H1 (cell line): ENCODE measurements at regions of chr9 and their contacts with region 1.

Region 1: DNA sequence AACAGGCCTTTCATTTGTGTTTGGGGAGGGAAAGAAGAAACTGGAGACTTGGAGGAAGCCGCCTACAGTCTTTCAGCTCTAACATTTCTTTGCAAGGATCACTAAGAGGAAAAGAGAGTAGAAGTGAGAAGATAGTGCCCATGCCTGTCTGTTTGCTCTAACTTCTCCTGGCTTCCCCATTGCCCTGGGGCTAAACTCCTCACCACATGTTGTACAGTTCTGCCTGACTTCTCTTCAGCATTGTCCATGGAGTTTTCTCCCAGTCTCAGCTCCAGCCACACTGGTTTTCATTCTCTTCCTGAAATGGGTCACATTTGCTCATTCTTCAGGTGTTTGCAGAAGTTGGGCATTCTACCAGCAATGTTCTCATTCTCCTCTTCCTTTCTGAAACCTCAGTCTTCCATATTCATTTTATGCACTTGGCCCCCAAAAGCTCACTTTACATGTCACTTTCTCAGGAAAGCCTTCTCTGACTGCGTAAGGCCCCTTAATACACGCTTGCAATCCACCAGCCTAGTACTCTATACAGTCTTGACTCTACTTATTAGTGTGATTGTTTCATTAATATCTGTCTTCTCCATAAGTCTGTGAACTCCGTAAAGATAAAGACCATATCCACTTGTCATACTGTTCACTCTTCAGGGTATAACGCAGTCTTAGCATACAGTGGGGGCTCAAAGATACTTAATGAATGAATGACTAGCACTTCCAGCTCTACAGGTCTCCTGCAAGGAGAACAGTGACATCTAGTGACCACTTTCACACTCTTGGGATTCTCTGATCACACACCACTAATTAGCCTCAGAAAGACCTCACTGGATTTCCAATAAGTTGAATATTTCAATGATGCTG is 40.2 kb upstream of the TRIM32 start:
- DNase-seq: no peak
- H3K4me3 ChIP-seq: no peak overlapping the region
- H3K27ac ChIP-seq: no peak overlapping the region
- H3K4me1 ChIP-seq: no peaks in the 10 kb centered on the region
- H3K27me3 ChIP-seq: no peaks in the 10 kb centered on the region
- CTCF ChIP-seq: peak in 2 of 3 experiments; percentile 63 to 71; a peak in 3 of 4 replicates
- EP300 ChIP-seq: no peak
- POLR2A ChIP-seq: no peak
- RAD21 ChIP-seq: peak; percentile 79 to 81

Region 2: GRCh38 chr9:116632990-116633838 is 13.7 kb before region 1 on chr9:
- CTCF ChIA-PET with region 1: interaction called, 19 read pairs
- POLR2A ChIA-PET with region 1: no interaction called
- DNase-seq: no peak
- H3K4me3 ChIP-seq: no peak overlapping the region
- H3K27ac ChIP-seq: no peak overlapping the region
- H3K4me1 ChIP-seq: no peaks in the 10 kb centered on the region
- H3K27me3 ChIP-seq: no peaks in the 10 kb centered on the region
- CTCF ChIP-seq: no peak
- EP300 ChIP-seq: no peak
- POLR2A ChIP-seq: no peak
- RAD21 ChIP-seq: no peak

Region 3: DNA sequence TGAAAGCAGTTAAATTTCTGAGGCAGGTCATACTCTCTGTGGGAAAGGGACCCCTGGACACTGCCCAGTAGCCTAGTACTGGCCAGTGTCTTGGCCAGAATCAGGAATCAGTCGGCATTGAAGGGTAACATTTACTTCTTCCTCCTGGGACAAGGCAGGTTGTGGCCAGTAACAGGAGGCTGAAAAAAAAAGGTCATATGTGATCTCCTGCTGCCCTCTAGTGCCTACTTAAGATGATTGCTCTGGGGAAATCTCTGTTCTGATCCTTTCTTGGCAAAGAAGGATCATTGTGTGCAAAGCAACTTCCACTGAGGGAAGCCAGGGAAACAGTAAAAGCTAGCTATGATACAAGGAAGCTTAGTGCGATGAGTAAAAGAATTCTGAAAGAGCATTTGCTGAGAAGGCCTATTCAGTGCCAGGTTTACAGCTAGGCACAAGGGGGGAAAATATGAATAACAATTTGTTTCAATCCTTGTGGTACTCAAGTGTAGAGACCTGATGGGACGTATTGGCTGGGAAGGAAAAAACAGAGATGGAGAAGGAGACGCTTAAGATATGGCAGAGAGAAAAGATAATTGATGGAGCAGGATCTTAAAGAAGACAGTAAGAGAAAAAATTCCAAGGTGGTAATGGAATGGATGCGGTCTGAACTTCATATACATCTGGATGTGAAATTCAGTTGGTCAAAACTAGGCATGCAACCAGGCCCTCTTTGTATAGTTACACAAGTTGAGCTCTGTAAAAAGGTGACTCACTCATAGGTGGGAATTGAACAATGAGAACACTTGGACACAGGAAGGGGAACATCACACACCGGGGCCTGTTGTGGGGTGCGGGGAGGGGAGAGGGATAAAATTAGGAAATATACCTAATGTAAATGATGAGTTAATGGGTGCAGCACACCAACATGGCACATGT is 14.4 kb after region 1 on chr9:
- CTCF ChIA-PET with region 1: interaction called, 12 read pairs
- POLR2A ChIA-PET with region 1: no interaction called
- DNase-seq: no peak
- H3K4me3 ChIP-seq: no peak overlapping the region
- H3K27ac ChIP-seq: no peak overlapping the region
- H3K4me1 ChIP-seq: peaks cover 0 to 6% (median 0%) of the 10 kb centered on the region in 4 experiments; a peak in 1 of 7 replicates
- H3K27me3 ChIP-seq: no peaks in the 10 kb centered on the region
- CTCF ChIP-seq: peak in 2 of 3 experiments; percentile 81 to 82; a peak in 3 of 4 replicates
- EP300 ChIP-seq: no peak
- POLR2A ChIP-seq: no peak
- RAD21 ChIP-seq: peak; percentile 92 to 93

Region 4: GRCh38 chr9:116683535-116683934 is 36.6 kb after region 1 on chr9:
- CTCF ChIA-PET with region 1: no interaction called
- POLR2A ChIA-PET with region 1: no interaction called
- DNase-seq: no peak
- H3K4me3 ChIP-seq: no peak overlapping the region
- H3K27ac ChIP-seq: no peak overlapping the region
- H3K4me1 ChIP-seq: peaks cover 0 to 9% (median 1%) of the 10 kb centered on the region in 4 experiments; a peak in 5 of 7 replicates
- H3K27me3 ChIP-seq: no peaks in the 10 kb centered on the region; a peak in 2 of 7 replicates
- CTCF ChIP-seq: no peak
- EP300 ChIP-seq: no peak
- POLR2A ChIP-seq: no peak
- RAD21 ChIP-seq: no peak

Region 5: GRCh38 chr9:116817762-116818161 is 170.9 kb after region 1 on chr9:
- CTCF ChIA-PET with region 1: no interaction called
- POLR2A ChIA-PET with region 1: no interaction called
- DNase-seq: no peak
- H3K4me3 ChIP-seq: no peak overlapping the region
- H3K27ac ChIP-seq: no peak overlapping the region
- H3K4me1 ChIP-seq: no peaks in the 10 kb centered on the region; a peak in 2 of 7 replicates
- H3K27me3 ChIP-seq: no peaks in the 10 kb centered on the region
- CTCF ChIP-seq: no peak
- EP300 ChIP-seq: no peak
- POLR2A ChIP-seq: no peak
- RAD21 ChIP-seq: no peak